ENCODE measurements at regions of chr15 and their contacts with region 1.

Region 1: GRCh38 chr15:44066316-44066740 is 128.7 kb downstream of the FRMD5 start:
- DNase-seq: no peak
- H3K4me3 ChIP-seq: no peak overlapping the region
- CTCF ChIP-seq: peak; percentile 63

Region 2: DNA sequence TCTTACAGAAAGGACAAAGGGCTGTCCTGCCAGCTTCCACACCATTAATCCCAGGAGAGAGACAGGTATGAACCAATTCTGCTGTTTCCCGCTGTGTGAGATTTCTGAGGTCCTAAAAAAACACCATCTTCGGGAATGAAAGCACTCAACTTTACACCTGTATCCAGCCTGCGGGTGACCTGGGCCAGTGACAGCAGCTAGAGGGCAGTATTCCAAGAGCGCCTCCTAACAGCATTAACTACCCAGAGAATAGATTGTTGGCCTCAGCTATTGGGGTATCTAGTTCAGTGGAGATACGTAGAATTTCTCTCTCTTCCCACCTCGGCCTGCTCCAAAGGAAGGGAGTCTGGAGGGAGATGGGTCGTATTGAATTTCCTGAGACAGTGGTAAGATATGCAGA is 184.4 kb before region 1 on chr15:
- CTCF ChIA-PET with region 1: interaction called, 14 read pairs
- POLR2A ChIA-PET with region 1: no interaction called
- DNase-seq: no peak
- H3K4me3 ChIP-seq: no peak overlapping the region
- CTCF ChIP-seq: peak; percentile 24

Region 3: DNA sequence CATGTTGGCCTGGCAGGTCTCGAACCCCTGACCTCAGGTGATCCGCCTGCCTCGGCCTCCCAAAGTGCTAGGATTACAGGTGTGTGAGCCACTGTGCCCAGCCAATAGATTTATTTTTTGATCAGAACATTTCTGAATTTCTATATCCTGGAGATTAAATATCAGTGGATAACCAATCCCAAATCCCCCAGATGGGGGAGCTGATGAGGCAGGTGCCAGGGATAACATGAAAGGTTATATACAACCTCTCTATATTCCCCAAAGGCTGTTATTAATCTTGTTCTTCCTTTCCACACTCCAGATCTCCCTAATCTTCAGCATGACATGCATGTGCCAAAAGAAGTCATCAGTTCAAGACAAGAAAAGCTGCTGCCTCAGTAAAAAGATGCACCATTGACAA is 127.3 kb before region 1 on chr15:
- CTCF ChIA-PET with region 1: interaction called, 13 read pairs
- POLR2A ChIA-PET with region 1: no interaction called
- DNase-seq: no peak
- H3K4me3 ChIP-seq: no peak overlapping the region
- CTCF ChIP-seq: peak; percentile 28

Region 4: DNA sequence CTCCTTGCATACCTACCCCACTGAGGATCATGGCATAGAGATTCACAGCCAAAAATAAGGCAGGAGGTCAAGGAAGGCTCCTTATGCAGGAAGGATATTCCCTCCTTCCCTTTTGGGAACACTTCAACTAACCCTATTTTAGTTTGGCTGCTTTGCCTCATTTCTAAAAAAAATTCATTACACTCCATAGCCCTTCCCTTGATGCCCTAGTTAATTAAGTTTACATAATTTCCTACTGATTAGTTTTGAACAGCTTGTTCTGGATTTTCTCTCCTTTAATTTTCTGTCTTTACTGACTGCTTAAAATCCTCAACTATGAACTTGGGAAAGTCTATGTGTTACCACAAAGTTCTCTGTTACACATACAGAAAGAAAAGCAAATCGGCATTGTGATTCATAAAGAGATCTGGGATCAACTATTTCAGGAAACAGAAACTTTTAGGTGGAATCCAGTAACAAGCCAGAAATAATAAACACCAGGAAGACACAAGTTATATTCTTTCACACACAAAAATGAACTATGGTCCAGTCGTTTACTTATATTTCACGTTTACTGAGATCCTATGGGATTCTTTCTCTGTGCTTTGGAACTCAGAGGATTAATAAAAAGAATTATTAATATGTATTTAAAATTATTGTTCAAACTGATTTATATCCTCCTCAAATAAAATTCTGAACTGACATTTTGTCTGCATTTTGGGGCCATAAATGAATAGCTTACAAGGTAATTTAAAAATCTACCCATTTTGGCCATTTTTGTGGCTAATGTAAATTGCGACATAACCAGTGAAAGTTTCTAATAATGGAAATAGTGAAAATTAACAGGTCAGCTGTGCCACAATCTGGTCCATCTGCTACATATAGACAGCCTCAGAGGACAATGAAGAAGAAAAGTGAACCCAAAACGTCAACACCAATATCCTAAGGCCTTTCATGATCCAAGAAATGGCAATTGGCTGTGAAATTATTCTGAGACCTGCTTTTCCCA is 15.0 kb after region 1 on chr15:
- CTCF ChIA-PET with region 1: interaction called, 22 read pairs
- POLR2A ChIA-PET with region 1: no interaction called
- DNase-seq: peak; percentile 49
- H3K4me3 ChIP-seq: no peak overlapping the region
- CTCF ChIP-seq: no peak

Measured in AG04449 (cell line).